ENCODE measurements at regions of chr3 and their contacts with region 1.

Region 1: GRCh38 chr3:138594150-138594934 is at the start of gene CEP70:
- DNase-seq: peak; percentile 95
- H3K4me3 ChIP-seq: peak within 1 kb of the TSS; percentile 70 to 84 (median 79)
- H3K27ac ChIP-seq: peak within 1 kb of the TSS; percentile 86
- H3K4me1 ChIP-seq: peaks cover 3% of the 10 kb centered on the region
- H3K27me3 ChIP-seq: no peaks in the 10 kb centered on the region
- CTCF ChIP-seq: peak; percentile 75 to 93
- total RNA-seq, gene CEP70: 18.7 to 19.5 TPM

Region 2: DNA sequence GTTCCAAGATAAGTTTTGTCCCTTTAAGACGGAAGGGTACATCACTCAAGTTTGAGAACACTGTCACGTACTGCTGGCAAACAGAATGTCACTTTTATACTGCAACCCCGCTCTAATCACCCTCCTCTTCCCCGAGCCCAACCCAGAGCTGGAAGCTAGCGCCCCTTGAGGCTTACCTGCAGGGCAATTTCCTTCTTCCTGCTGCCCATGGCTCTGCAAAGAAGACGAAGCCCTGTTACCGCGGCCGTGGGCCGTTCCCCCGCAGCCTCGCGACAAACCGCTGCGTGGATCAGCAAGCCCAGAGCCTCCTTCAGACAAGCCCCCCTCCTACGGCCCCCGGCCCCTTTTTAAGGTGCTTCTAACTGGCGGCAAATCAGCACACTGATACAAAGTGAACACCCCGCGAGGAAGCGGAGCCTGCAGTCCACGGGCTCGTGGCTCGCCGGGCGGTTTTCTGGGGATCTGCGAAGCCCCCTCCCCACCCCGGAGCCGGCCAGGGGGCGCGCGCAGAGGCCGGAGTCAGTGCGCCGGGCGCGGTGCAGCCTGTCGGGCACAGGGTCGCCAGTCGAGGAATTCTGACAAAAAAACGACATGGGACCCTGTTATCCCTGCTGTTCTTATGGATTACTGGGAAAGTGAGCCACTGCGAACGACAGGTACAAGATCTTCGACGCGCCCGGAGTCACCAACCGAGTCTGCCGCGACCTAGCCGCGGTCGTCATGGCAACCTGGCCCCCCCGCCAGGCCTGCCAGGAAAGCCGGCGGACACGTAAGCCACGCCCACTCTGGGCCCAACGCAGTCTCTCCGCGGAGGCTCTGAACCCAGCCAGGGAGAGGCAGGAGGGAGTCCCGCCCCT is 265.0 kb before region 1 on chr3 and contains the start of gene NME9:
- CTCF ChIA-PET with region 1: no interaction called
- dilution Hi-C with region 1: no loop called
- in situ Hi-C with region 1: no loop called
- intact Hi-C with region 1: loop called (anchors 1 kb)
- DNase-seq: peak; percentile 52
- H3K4me3 ChIP-seq: peak within 1 kb of the TSS; percentile 43 to 54 (median 46)
- H3K27ac ChIP-seq: no peak within 1 kb of the TSS
- H3K4me1 ChIP-seq: peaks cover 44% of the 10 kb centered on the region
- H3K27me3 ChIP-seq: no peaks in the 10 kb centered on the region
- CTCF ChIP-seq: peak; percentile 52 to 58
- total RNA-seq, gene NME9: 0.50 TPM in 1 of 2 donors, not detected in the other

Region 3: GRCh38 chr3:138408751-138409161 is 185.6 kb before region 1 on chr3:
- CTCF ChIA-PET with region 1: no interaction called
- dilution Hi-C with region 1: no loop called
- in situ Hi-C with region 1: no loop called
- intact Hi-C with region 1: no loop called
- DNase-seq: no peak
- H3K4me3 ChIP-seq: no peak overlapping the region
- H3K27ac ChIP-seq: no peak overlapping the region
- H3K4me1 ChIP-seq: no peaks in the 10 kb centered on the region
- H3K27me3 ChIP-seq: no peaks in the 10 kb centered on the region
- CTCF ChIP-seq: no peak

Region 4: DNA sequence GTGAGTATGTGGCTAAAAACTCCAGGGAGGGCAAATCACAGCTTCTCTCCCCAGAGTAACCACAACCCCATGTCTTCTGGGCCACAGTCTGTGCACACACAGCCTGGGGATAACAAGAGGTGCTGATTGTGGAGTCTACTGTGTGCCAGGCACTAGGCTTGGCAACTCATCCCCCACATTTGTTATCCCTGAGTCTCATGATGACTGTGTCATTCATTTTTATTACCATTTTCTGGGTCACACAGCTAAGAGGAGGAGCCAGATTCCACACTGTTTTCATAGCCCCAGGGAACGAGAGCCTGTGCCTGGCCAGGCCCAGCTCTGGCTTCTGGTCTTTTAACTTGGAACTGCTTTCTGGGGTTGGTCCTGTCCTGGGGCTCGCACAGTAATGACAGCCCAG is 125.5 kb before region 1 on chr3:
- CTCF ChIA-PET with region 1: no interaction called
- dilution Hi-C with region 1: no loop called
- in situ Hi-C with region 1: no loop called
- intact Hi-C with region 1: no loop called
- DNase-seq: peak; percentile 76
- H3K4me3 ChIP-seq: no peak overlapping the region
- H3K27ac ChIP-seq: no peak overlapping the region
- H3K4me1 ChIP-seq: no peaks in the 10 kb centered on the region
- H3K27me3 ChIP-seq: no peaks in the 10 kb centered on the region
- CTCF ChIP-seq: no peak

Region 5: DNA sequence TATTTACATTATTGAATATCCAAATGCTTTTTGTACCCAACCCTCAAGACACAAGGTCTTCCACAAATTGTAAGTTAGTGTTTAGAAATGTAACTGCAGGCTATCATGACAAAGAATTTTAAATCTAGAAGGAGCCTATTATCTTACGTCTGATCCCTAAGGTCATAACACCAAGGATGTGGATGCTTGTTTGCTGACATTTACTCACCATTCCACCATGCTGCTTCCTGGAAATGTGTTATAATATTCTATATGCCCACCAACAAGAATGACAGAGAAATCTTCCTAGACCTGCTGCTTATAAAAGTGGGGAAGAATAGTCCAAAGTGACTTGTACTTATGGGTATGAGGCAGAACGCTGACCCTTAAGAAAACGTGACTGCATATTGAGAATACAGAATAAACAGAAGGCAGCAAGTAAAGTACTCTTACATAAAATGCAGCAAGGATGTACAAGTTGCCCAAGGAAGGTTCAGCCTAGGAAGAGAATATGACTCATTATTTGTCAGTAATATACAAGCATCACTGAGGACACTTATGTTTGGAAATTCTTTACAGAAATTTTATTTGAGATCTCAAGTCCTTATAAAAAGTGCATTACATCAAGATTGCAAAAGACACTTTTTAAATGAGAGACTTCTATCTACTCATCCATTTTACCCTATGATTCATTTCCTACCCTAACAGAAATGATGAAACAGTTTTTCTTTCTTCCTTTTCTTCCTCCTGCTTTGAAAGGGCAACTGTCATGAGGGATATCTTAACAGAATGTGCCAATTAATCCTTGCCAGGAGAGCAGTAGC is 100.3 kb before region 1 on chr3:
- CTCF ChIA-PET with region 1: no interaction called
- dilution Hi-C with region 1: no loop called
- in situ Hi-C with region 1: no loop called
- intact Hi-C with region 1: loop called (anchors 5 kb)
- DNase-seq: peak; percentile 74
- H3K4me3 ChIP-seq: no peak overlapping the region
- H3K27ac ChIP-seq: peak overlapping the region; percentile 14
- H3K4me1 ChIP-seq: peaks cover 12% of the 10 kb centered on the region
- H3K27me3 ChIP-seq: no peaks in the 10 kb centered on the region
- CTCF ChIP-seq: no peak

Region 6: GRCh38 chr3:138649134-138649533 is 54.8 kb after region 1 on chr3:
- CTCF ChIA-PET with region 1: no interaction called
- dilution Hi-C with region 1: no loop called
- in situ Hi-C with region 1: no loop called
- intact Hi-C with region 1: no loop called
- DNase-seq: no peak
- H3K4me3 ChIP-seq: no peak overlapping the region
- H3K27ac ChIP-seq: no peak overlapping the region
- H3K4me1 ChIP-seq: no peaks in the 10 kb centered on the region
- H3K27me3 ChIP-seq: no peaks in the 10 kb centered on the region
- CTCF ChIP-seq: no peak

Region 7: DNA sequence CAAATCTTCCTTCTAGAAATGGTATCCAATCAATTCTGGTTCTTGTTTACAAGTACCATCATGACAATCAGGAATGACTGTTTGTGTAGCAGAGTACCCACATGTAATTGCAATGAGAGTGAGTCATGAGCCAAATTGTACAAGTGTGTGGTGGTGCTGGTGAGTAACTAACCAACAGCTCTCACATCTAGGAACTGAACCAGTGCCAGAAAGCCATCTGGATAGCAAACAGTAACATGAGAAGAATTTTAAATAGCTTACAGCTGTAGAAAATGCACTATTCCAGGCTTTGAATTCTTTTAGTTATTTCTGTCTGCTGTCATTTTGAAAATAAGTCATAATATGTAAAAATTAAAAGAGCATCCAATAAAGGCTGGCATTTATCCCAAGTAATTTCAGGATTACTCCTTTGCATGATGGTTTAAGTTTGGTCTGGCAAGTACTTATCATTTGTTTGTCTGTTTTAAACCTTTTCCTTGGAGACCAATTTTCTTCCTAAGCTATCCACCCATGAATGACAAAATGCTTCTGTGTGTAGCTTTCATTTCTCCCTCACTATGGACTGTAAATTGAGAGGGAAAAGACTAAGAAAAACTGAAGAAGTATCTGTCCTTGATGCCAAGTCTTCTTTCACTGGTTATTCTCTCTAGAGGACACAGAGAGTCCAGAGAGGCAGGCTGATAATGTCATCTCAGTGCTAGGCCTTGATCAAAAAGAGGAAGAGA is 180.3 kb after region 1 on chr3:
- CTCF ChIA-PET with region 1: no interaction called
- dilution Hi-C with region 1: no loop called
- in situ Hi-C with region 1: no loop called
- intact Hi-C with region 1: loop called (anchors 10 kb)
- DNase-seq: peak; percentile 98
- H3K4me3 ChIP-seq: no peak overlapping the region
- H3K27ac ChIP-seq: peak overlapping the region; percentile 84
- H3K4me1 ChIP-seq: peaks cover 25% of the 10 kb centered on the region
- H3K27me3 ChIP-seq: no peaks in the 10 kb centered on the region
- CTCF ChIP-seq: no peak

Region 8: DNA sequence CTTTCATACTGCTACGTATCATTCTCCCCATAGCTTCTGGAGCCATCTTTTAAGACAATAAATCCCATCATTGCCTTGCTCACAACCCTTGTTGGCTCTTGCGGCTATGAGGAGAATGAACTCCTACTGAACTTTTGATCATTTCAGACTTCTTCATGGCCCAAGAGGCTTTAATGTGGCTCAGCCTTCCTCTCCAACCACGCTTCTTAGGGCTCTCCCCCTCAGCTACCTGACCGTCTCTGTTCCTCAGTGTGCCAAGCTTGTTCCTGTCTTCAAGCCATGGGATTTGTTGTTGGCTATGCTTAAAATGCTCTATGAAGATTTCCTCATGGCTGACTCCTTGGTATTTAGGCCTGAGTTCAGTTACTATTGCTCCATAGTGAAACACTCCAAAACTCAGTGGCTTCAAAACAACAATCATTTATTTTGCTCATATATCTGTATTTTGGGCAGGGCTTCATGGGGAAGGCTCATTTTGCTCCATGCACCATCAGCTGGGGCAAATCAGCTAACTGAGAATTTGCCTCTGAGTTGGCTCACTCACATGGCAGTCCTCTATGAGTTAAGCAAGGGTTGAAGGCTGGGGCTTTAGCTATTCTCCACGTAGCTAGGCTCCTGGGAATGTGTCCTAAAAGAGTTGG is 305.1 kb after region 1 on chr3:
- CTCF ChIA-PET with region 1: no interaction called
- dilution Hi-C with region 1: no loop called
- in situ Hi-C with region 1: no loop called
- intact Hi-C with region 1: no loop called
- DNase-seq: no peak
- H3K4me3 ChIP-seq: no peak overlapping the region
- H3K27ac ChIP-seq: no peak overlapping the region
- H3K4me1 ChIP-seq: no peaks in the 10 kb centered on the region
- H3K27me3 ChIP-seq: no peaks in the 10 kb centered on the region
- CTCF ChIP-seq: no peak

Region 9: GRCh38 chr3:138915503-138916498 is 321.5 kb after region 1 on chr3:
- CTCF ChIA-PET with region 1: interaction called, 19 read pairs
- dilution Hi-C with region 1: no loop called
- in situ Hi-C with region 1: loop called in 1 of 2 experiments (anchors 10 kb)
- intact Hi-C with region 1: loop called (anchors 1 kb)
- DNase-seq: peak; percentile 82
- H3K4me3 ChIP-seq: peak overlapping the region; percentile 48 to 69 (median 58)
- H3K27ac ChIP-seq: peak overlapping the region; percentile 50
- H3K4me1 ChIP-seq: peaks cover 15% of the 10 kb centered on the region
- H3K27me3 ChIP-seq: no peaks in the 10 kb centered on the region
- CTCF ChIP-seq: peak; percentile 61 to 87

Region 10: GRCh38 chr3:138928727-138929385 is 334.5 kb after region 1 on chr3:
- CTCF ChIA-PET with region 1: no interaction called
- dilution Hi-C with region 1: no loop called
- in situ Hi-C with region 1: loop called (anchors 5 to 10 kb)
- intact Hi-C with region 1: no loop called
- DNase-seq: no peak
- H3K4me3 ChIP-seq: no peak overlapping the region
- H3K27ac ChIP-seq: no peak overlapping the region
- H3K4me1 ChIP-seq: no peaks in the 10 kb centered on the region
- H3K27me3 ChIP-seq: no peaks in the 10 kb centered on the region
- CTCF ChIP-seq: no peak

Region 11: GRCh38 chr3:139329345-139329850 is 735.1 kb after region 1 on chr3:
- CTCF ChIA-PET with region 1: no interaction called
- dilution Hi-C with region 1: no loop called
- in situ Hi-C with region 1: no loop called
- intact Hi-C with region 1: loop called (anchors 10 kb)
- DNase-seq: peak; percentile 72
- H3K4me3 ChIP-seq: no peak overlapping the region
- H3K27ac ChIP-seq: no peak overlapping the region
- H3K4me1 ChIP-seq: no peaks in the 10 kb centered on the region
- H3K27me3 ChIP-seq: no peaks in the 10 kb centered on the region
- CTCF ChIP-seq: peak; percentile 96 to 99

Measured in mammary epithelial cell (primary cell).